Dorsolateral prefrontal cortex (tissue), 120 donors: ENCODE measurements at regions of chr6 and their contacts with region 1.

Region 1: GRCh38 chr6:2900821-2901644 is 2.1 kb downstream of the SERPINB9 start:
- DNase-seq: peak in 5 of 10 donors; percentile 32 to 59 (median 55)
- H3K4me3 ChIP-seq: peak overlapping the region; percentile 1 to 92 (median 80)
- H3K27ac ChIP-seq: peak overlapping the region in 55 of 59 donors; percentile 7 to 97 (median 76)
- H3K27me3 ChIP-seq: no peaks in the 10 kb centered on the region
- CTCF ChIP-seq: peak in 4 of 56 donors; percentile 8 to 28 (median 14)

Region 2: DNA sequence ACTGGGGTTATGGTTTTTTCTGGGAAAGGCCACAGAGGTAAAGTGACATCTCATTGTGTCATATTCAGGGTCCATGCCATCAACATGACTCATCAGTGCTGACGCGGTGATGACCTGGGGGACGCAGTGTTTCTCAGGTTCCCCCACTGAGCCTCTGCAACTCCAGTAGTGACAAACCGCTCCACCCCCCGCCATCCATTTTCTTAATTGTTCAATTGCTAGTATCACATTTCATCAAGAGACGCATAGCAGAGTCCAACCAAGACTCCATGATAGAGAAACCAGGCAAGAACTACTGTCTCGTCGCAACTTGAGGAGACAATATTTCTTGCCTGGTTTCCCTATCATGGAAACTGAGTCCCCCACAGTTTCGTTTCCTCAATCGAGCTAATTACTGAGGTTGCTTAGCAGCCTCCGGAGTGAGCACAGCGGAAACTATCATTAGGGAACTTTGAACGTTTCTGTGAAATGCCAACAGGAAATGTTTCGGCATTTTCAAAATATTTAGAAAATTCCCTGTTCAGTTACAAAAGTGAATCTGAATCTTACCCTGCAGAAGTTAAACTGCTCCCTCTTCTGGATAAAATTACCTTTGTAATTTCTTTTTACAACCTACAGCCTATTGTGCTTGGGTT is 47.2 kb before region 1 on chr6:
- intact Hi-C with region 1: loop called in 1 of 2 experiments (anchors 5 kb)
- DNase-seq: no peak
- H3K4me3 ChIP-seq: peak overlapping the region in 54 of 59 donors; percentile 5 to 64 (median 44)
- H3K27ac ChIP-seq: peak overlapping the region in 54 of 59 donors; percentile 3 to 83 (median 63)
- H3K27me3 ChIP-seq: no peaks in the 10 kb centered on the region
- CTCF ChIP-seq: peak; percentile 24 to 69 (median 51)

Region 3: DNA sequence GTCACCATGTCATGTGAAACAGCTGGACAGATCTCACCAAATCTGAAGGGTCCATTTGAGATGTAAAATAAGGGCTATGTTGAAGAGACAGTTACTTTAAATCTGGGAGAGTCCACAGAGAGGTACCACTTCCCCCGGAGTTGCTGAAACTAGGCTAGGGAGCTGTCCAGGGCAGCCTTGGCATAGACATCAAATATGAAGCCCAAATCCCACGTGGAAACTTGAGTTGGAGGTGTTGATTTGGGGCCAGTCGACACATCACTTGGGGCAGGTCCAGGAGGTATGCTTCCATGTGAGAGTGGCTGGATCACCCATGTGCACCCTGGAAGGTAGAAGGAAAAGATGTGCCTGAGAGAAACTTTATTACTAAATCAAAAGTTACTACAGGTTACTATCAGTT is 14.1 kb after region 1 on chr6:
- intact Hi-C with region 1: loop called in 1 of 2 experiments (anchors 1 kb)
- DNase-seq: no peak
- H3K4me3 ChIP-seq: no peak overlapping the region
- H3K27ac ChIP-seq: peak overlapping the region in 1 of 59 donors; percentile 85
- H3K27me3 ChIP-seq: no peaks in the 10 kb centered on the region
- CTCF ChIP-seq: no peak